Posterior vena cava (tissue), 2 donors: ENCODE measurements at regions of chr20 and their contacts with region 1.

Region 1: DNA sequence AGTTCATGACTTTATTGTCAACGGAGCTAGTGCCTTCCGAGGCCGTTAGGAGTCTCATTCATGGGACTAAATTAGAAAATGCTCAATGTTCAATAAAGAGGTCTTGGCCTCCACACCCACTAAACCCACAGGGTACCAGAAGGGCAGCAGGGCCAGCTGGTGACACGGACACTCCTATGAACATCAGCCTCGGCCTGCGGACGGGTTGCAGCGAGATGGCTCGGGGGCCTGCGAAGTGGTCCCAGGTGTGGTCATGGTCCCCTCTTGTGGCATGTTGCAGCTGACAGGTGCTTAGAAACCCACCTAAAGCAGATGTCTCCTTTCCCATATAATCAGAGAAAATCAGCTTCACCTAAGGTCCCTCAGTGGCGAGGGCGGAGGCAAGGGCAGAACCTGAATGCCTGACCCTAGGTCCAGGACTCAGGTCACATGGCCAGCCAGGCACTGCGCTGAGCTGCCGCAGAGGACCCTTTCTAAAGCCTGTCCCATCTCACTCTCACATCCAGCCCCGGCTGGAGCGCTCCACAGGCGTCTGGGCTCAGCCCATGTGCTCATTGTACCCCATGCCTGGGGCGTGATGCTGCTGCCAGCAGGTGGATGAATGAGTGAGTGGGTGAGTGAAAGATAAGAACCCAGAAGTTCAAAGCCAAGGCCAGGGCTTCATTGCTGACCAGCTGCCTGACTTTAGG is 35.8 kb downstream of the NFATC2 start:
- DNase-seq: no peak

Region 2: DNA sequence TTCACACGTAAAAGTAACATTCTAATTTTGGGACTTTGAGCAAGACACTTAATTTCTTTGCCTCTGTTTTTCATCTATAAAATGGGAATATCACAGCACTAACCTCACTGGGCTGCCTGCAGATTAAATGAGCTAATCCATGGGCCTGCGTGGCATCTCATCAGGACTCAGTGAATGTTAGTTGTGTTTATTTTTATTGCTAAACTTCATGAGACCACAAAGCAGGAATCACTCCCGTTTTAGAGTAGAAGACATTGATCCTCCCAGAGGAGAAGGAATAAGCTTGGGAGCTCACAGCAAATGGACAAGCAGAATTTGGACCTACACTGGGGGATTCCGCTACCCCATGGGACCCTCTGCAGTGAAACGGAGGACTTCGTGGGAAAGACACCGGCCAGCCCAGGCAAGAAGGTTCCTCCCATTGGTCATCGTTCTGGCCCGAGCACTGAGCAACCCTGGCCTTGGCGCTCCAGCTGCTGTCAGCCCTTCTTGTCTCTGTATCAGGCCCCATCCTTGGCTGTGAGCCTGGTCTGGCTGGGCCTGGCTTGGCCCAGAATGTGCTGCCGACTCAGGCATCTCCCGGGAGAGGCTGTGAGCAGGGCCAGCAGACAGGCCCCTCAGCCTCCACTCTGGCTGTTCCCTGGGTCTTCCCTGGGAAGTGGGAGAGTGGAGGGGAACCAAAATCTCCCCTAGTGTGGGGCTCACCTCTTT is 44.0 kb before region 1 on chr20:
- intact Hi-C with region 1: loop called in 1 of 2 experiments (anchors 1 kb)
- DNase-seq: peak; percentile 95

Region 3: GRCh38 chr20:51480507-51481270 is 26.0 kb before region 1 on chr20:
- intact Hi-C with region 1: no loop called
- DNase-seq: no peak

Region 4: GRCh38 chr20:51541189-51542032 is 34.7 kb after region 1 on chr20:
- intact Hi-C with region 1: no loop called
- DNase-seq: peak; percentile 93